Mucosa of descending colon (tissue), 3 donors: ENCODE measurements at regions of chr20 and their contacts with region 1.

Region 1: GRCh38 chr20:57388953-57389694 is 2.1 kb upstream of the RBM38 start:
- DNase-seq: peak; percentile 87 to 91 (median 91)
- ATAC-seq: peak; percentile 74
- H3K4me3 ChIP-seq: no peak overlapping the region
- H3K4me1 ChIP-seq: peaks cover 40% of the 10 kb centered on the region
- CTCF ChIP-seq: no peak

Region 2: DNA sequence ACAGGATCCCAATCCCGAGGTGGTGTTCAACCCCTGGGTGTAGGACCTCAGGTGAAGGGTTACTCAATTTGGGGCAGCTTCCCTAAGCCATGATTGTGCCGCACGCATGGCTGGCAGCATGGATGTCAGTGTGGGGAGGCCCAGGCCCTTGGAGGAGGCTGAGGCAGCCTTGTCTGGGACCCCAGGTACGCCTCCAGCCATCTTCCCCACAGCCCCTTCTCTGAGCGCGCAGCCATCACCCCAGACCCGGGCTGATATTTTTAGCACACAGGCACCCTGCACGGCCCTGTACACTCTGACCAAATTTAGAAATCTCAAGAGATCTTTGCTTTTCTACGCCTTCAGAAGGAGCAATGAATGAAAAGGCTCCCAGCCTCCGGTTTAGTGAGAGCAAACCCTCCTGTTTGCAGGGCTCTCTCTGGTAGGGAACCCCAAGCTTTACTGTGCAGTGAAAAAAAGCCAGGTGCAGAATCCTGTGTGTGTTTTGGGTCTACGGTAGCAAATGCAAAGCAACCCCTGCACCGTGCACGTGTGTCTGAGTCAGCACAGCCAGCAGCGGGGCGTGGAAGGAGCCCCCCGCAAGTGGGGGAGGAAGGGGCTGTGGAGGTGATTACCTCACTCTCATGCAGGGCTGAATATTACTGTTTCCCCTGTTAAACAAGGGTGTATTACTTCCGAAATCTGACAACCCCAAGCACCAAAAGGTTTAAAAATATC is 91.5 kb after region 1 on chr20:
- intact Hi-C with region 1: no loop called
- DNase-seq: no peak
- ATAC-seq: peak; percentile 47
- H3K4me3 ChIP-seq: no peak overlapping the region
- H3K4me1 ChIP-seq: no peaks in the 10 kb centered on the region
- CTCF ChIP-seq: no peak

Region 3: GRCh38 chr20:57582432-57583305 is 193.5 kb after region 1 on chr20:
- intact Hi-C with region 1: loop called in 1 of 2 experiments (anchors 10 kb)
- DNase-seq: peak in 2 of 3 donors; percentile 38 to 43
- ATAC-seq: no peak
- H3K4me3 ChIP-seq: no peak overlapping the region
- H3K4me1 ChIP-seq: peaks cover 19% of the 10 kb centered on the region
- CTCF ChIP-seq: no peak